HepG2 (cell line): ENCODE measurements at regions of chr15 and their contacts with region 1.

Region 1: GRCh38 chr15:41465822-41466421 is 27.8 kb upstream of the ITPKA start:
- DNase-seq: peak; percentile 50
- ATAC-seq: peak; percentile 76
- H3K4me3 ChIP-seq: no peak overlapping the region
- H3K27ac ChIP-seq: no peak overlapping the region
- H3K4me1 ChIP-seq: no peaks in the 10 kb centered on the region
- H3K27me3 ChIP-seq: no peaks in the 10 kb centered on the region
- CTCF ChIP-seq: peak; percentile 86
- EP300 ChIP-seq: no peak
- POLR2A ChIP-seq: no peak
- RAD21 ChIP-seq: peak; percentile 74

Region 2: DNA sequence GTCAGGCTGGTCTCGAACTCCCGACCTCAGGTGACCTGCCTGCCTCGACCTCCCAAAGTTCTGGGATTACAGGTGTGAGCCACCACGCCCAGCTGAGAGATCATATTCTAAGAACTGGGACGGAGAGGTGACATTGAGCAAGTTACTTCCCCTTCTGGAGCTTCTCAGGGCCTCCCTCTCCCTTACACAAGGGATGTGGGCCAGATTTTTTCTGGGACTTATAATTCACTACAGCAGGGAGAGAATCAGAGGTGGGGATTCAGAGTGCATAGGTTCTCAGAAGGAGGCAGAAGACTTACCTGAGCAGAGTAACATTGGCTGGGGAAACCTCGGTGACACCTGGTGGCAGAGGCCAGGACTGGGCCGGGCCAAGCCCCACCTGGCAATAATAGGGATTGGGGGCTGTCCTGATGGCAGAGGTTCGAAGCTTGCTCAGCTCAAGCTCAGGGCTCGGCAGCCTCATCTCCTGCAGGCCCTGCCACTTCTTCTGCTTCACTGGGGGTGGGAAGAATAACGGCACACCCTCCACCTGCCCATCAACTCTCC is 40.9 kb after region 1 on chr15:
- CTCF ChIA-PET with region 1: interaction called, 13 read pairs
- POLR2A ChIA-PET with region 1: no interaction called
- in situ Hi-C with region 1: no loop called
- intact Hi-C with region 1: loop called (anchors 5 kb)
- DNase-seq: no peak
- ATAC-seq: peak; percentile 55
- H3K4me3 ChIP-seq: no peak overlapping the region
- H3K27ac ChIP-seq: no peak overlapping the region
- H3K4me1 ChIP-seq: no peaks in the 10 kb centered on the region
- H3K27me3 ChIP-seq: no peaks in the 10 kb centered on the region; a peak in 1 of 5 replicates
- CTCF ChIP-seq: peak; percentile 52
- EP300 ChIP-seq: no peak
- POLR2A ChIP-seq: no peak
- RAD21 ChIP-seq: no peak

Region 3: DNA sequence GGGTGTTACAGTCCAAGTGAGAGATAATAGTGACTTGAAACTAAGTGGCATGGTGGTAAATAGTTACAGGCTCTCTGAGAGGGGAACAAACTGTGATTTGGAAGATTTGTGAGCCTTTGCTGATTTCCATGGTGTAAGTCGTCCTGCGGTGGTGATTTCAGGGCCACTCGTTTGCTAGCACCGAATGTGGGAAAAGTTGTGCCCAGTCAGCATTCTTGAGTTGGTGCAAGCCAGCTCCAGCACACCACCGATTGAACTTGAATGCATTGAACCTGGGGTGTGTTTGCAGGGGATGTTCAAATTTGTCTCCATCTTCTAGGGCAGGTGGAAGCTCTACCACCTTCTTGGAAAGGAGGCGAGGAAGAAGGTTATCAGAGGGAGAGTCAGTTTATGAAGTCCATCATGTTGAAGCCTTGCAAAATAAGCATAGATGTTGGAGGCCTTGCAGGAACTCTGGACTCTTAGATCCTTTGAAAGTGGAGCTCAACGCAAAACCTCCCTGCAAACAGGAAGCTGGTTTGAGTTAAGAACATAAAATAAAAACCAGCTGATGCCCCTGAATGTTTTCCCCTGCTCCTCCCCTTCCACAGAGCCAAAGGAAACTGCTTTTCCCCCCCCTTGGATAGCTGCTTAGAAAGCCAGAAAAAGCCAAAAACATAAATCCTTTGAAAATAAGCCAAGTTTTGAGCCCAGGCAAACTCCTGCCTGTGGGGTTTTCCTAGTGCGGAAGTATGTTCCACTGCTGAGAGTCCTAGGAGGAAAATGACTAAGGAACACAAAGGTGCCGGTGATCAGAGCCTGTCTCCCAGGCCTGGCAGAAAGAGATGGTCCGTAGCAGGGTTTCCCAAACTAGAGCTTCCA is 330.3 kb after region 1 on chr15:
- CTCF ChIA-PET with region 1: no interaction called
- POLR2A ChIA-PET with region 1: no interaction called
- in situ Hi-C with region 1: no loop called
- intact Hi-C with region 1: no loop called
- DNase-seq: peak; percentile 32
- ATAC-seq: no peak; the same call in 2 of the 3 replicates
- H3K4me3 ChIP-seq: no peak overlapping the region
- H3K27ac ChIP-seq: peak overlapping the region; percentile 54
- H3K4me1 ChIP-seq: peaks cover 41% of the 10 kb centered on the region
- H3K27me3 ChIP-seq: no peaks in the 10 kb centered on the region
- CTCF ChIP-seq: no peak
- EP300 ChIP-seq: no peak
- POLR2A ChIP-seq: no peak
- RAD21 ChIP-seq: no peak